AG04450 (cell line): ENCODE measurements at regions of chr1 and their contacts with region 1.

Region 1: DNA sequence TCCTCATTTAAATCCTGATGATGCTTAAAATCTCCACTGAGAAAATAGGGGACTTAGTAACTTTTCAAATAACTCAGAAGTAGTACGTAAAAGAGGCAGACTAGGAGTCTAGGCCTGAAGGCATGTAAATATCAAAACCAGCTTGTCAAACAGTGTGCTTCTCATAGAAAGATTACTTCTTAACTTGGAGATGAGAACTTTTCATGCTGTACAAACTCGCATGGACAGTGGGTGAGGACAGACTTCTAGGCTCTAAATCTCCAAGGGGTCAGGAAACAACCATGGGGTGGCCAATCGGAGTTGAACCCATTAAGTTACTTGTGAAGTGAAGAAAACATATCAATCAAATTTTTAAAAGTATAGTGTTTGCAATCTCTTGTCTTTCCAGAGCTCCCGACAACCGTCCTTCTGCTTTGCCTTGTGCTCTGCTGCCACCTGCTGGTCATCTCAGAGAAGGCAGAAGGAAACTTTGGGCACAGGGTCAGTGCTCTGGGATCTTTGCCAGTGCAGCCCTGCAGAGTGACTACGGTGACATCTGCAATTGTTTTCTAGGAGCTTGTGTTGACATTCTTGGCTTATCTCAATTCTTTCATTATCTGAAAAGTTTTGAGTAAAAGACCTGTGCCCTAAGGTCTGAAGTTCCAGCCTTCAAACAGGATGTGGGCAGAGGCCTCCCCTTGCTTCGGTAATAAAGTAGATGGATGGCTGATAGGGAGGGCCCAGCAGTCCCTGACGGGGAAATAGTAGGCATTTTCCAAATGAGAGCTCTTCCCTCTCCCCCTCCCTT is 105.1 kb upstream of the PDE4B start:
- DNase-seq: peak; percentile 36
- H3K4me3 ChIP-seq: no peak overlapping the region
- H3K27ac ChIP-seq: no peak overlapping the region
- H3K27me3 ChIP-seq: peaks cover 2% of the 10 kb centered on the region
- CTCF ChIP-seq: peak; percentile 91

Region 2: GRCh38 chr1:65059930-65060538 is 627.6 kb before region 1 on chr1:
- CTCF ChIA-PET with region 1: interaction called, 17 read pairs
- POLR2A ChIA-PET with region 1: no interaction called
- DNase-seq: no peak
- H3K4me3 ChIP-seq: no peak overlapping the region
- H3K27ac ChIP-seq: no peak overlapping the region
- H3K27me3 ChIP-seq: peaks cover 5% of the 10 kb centered on the region
- CTCF ChIP-seq: peak; percentile 61

Region 3: GRCh38 chr1:65213271-65214023 is 474.2 kb before region 1 on chr1:
- CTCF ChIA-PET with region 1: interaction called, 45 read pairs
- POLR2A ChIA-PET with region 1: no interaction called
- DNase-seq: no peak
- H3K4me3 ChIP-seq: no peak overlapping the region
- H3K27ac ChIP-seq: no peak overlapping the region
- H3K27me3 ChIP-seq: no peaks in the 10 kb centered on the region
- CTCF ChIP-seq: no peak

Region 4: DNA sequence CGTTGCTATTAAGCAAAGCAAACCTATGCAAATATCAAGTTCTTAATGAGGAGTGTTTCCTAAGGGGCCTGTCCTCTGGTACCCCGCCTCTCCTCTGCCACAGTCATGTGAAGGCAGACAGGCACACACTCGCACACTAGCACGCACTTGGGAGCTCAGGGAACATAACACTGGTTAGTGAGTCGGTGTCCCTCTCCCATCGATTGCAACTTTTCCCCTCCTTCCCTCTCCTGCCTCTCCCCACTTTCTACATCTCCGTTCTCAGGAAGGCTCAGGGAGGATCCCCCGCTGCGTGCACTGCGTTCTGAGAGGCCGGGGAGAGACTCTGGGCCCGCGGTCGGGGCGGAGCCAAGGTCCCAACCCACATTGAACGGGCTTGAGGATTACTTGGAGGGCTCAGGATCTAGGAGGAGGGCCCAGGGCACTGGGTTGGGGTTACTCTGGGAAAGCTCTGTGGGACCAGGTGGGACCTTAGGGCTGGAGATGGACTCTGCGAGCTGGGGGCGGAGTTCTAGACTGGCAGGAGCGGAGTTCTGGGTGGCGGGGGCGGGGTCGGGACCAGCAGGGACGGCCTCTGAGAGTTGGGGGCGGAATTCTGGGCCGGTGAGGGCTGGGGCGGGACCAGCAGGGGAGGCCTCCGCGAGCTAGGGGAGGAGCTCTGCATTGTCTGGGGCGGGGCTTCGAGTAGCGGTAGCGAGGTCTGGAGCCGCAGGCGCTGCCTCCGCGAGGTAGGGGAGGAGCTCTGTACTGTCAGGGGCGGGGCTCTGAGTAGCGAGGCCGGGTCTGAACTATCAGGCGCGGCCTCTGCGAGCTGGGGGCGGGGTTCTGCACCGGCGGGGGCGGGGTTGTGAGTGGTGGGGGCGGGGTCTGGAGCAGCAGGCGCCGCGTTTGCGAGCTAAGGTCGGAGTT is 267.7 kb before region 1 on chr1:
- CTCF ChIA-PET with region 1: interaction called, 13 read pairs
- POLR2A ChIA-PET with region 1: no interaction called
- DNase-seq: peak; percentile 96
- H3K4me3 ChIP-seq: peak overlapping the region; percentile 73
- H3K27ac ChIP-seq: peak overlapping the region; percentile 65
- H3K27me3 ChIP-seq: no peaks in the 10 kb centered on the region
- CTCF ChIP-seq: no peak

Region 5: GRCh38 chr1:65459397-65459768 is 228.2 kb before region 1 on chr1:
- CTCF ChIA-PET with region 1: interaction called, 10 read pairs
- POLR2A ChIA-PET with region 1: no interaction called
- DNase-seq: no peak
- H3K4me3 ChIP-seq: no peak overlapping the region
- H3K27ac ChIP-seq: no peak overlapping the region
- H3K27me3 ChIP-seq: no peaks in the 10 kb centered on the region
- CTCF ChIP-seq: peak; percentile 49

Region 6: GRCh38 chr1:65703853-65704252 is 16.2 kb after region 1 on chr1:
- CTCF ChIA-PET with region 1: interaction called, 20 read pairs
- POLR2A ChIA-PET with region 1: no interaction called
- DNase-seq: no peak
- H3K4me3 ChIP-seq: no peak overlapping the region
- H3K27ac ChIP-seq: no peak overlapping the region
- H3K27me3 ChIP-seq: peaks cover 15% of the 10 kb centered on the region
- CTCF ChIP-seq: no peak